GM13977 (cell line): ENCODE measurements at regions of chr20 and their contacts with region 1.

Region 1: DNA sequence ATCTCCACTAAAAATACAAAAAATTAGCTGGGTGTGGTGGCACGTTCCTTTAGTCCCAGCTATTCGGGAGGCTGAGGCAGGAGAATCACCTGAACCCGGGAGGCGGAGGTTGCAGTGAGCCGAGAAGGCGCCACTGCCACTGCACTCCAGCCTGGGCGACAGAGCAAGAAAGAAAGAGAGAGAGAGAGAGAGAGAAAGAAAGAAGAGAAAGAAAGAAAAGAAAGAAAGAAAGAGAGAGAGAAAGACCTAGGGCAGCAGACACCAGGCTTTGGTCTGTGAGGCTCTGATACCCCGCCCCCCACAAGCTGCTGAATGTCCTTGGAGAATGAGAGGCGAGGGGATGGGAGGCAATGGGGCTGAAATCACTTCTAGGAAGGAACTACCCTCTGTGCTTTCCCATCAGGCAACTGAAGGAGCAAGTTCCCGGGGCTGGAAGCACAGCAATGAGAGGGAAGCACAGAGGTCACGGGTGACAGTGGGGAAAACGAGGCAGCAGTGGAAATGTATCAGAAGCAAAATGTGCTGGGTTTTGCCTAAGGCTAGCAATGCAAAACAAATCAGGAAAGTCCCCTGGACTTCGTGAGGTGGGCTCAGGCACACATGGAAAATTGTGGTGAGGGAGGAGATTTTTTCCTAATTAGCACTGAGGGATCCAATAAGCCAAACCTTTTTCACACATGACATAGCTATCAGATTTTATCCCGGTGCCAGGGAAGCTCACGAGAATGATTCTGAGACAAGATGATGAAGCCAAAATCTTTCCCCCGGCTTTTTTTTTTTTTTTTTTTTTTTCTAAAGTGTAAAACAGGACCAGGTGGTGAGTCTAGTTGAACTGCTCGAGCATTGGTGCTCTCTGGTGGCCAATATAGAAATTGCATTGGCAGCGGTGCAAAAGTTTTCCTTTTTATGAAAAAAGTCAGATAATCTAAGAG is 16.9 kb upstream of the ARFGEF2 start:
- DNase-seq: peak; percentile 68
- CTCF ChIP-seq: peak; percentile 78

Region 2: GRCh38 chr20:48657475-48658470 is 246.9 kb before region 1 on chr20:
- in situ Hi-C with region 1: loop called (anchors 5 kb)
- DNase-seq: peak; percentile 91
- CTCF ChIP-seq: peak; percentile 82

Region 3: GRCh38 chr20:49384437-49385088 is 479.9 kb after region 1 on chr20:
- in situ Hi-C with region 1: no loop called
- DNase-seq: peak; percentile 48
- CTCF ChIP-seq: peak; percentile 69